ENCODE measurements at regions of chrX and their contacts with region 1.

Region 1: GRCh38 chrX:120468825-120469525 is at the start of gene LAMP2:
- DNase-seq: peak; percentile 94
- H3K4me3 Mint-ChIP-seq: peak within 1 kb of the TSS; percentile 100
- H3K27ac Mint-ChIP-seq: peak within 1 kb of the TSS; percentile 96
- H3K4me1 Mint-ChIP-seq: peaks cover 20% of the 10 kb centered on the region
- H3K27me3 Mint-ChIP-seq: no peaks in the 10 kb centered on the region
- total RNA-seq, gene LAMP2: 42.6 and 44.3 TPM in 2 replicates

Region 2: DNA sequence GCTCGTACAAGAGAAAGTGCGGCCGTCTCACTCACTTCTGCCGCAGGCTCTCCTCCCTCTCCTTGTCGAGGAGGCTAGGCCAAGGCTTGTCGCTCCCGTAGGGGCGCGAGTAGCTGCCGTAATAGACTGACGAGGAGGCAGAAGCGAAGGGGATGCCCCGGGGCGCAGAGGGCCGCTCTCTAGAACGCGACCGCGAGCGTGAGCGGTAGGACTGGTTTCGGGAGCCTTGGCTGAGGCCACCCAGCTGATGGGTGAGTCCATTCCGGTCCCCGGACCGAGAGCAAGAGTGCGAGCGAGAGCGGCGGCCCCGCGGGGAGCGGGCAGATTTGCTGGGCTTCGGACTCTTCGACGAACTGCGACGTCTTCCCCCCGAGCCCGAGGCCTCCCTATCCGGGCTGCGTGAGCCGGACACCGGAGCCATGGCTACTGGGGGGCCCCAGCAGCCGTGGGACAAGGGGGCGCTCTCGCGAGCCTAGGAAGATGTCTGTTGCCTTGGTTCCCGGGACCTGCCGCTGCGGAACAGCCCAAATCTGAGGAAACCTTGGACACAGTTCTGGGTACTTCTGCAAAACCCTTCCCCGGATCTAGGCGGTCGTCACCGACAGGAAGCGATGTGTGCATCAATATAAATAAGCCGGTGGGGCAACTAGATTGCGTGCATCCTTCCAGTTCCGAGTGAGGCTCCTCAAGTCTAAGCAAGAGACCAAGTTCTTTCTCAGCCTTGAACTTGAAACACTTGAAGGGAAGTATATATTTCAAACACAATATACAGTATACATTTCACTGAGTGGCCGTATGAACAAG is 525.6 kb before region 1 on chrX and contains the start of gene NKAP:
- intact Hi-C with region 1: loop called (anchors 2 kb)
- DNase-seq: peak; percentile 95
- H3K4me3 Mint-ChIP-seq: peak within 1 kb of the TSS; percentile 91
- H3K27ac Mint-ChIP-seq: peak within 1 kb of the TSS; percentile 97
- H3K4me1 Mint-ChIP-seq: peaks cover 14% of the 10 kb centered on the region
- H3K27me3 Mint-ChIP-seq: peaks cover 2% of the 10 kb centered on the region
- total RNA-seq, gene NKAP: 8.9 and 10.2 TPM in 2 replicates

Region 3: DNA sequence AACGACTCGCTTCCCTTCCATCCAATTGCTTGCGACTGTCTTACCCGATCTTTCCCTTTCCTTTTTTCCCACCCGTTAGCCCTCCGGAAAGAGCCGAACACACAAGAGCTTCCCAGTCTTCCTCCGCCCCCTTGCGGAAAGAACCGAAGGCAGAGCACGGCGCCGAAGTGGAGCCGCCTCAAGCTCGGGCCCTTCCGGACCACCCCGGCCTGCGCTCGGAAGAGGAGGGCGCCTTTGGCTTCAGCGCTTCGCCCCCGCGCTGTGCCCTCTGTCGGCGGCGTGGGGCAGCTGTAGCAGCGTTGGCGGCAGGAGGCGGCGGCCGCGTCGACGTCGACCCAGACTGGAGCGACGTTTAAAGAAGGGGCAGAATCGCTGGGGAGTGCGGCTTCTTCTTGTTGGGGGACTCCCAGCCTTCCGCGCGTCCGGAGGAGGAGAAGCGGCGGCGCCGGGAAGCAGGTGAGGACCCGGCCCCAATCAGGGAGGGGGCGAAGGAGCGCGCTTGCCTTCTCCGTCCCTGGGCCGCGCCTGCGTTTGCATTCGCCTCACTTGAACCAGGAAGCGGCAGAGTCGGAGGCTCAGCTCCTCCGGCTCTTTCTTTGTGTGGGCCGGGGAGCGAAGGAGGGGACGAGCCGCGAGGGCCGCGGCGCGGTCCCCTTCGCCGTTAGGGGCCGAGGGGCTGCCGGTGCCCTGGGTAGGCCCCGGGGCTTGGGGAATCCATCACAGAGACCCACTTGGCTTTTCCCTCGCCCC is 218.3 kb before region 1 on chrX and contains the start of gene ZBTB33:
- intact Hi-C with region 1: loop called (anchors 1 kb)
- DNase-seq: peak; percentile 95
- H3K4me3 Mint-ChIP-seq: peak within 1 kb of the TSS; percentile 88
- H3K27ac Mint-ChIP-seq: peak within 1 kb of the TSS; percentile 95
- H3K4me1 Mint-ChIP-seq: peaks cover 9% of the 10 kb centered on the region
- H3K27me3 Mint-ChIP-seq: no peaks in the 10 kb centered on the region
- total RNA-seq, gene ZBTB33: 14.4 and 14.6 TPM in 2 replicates

Region 4: DNA sequence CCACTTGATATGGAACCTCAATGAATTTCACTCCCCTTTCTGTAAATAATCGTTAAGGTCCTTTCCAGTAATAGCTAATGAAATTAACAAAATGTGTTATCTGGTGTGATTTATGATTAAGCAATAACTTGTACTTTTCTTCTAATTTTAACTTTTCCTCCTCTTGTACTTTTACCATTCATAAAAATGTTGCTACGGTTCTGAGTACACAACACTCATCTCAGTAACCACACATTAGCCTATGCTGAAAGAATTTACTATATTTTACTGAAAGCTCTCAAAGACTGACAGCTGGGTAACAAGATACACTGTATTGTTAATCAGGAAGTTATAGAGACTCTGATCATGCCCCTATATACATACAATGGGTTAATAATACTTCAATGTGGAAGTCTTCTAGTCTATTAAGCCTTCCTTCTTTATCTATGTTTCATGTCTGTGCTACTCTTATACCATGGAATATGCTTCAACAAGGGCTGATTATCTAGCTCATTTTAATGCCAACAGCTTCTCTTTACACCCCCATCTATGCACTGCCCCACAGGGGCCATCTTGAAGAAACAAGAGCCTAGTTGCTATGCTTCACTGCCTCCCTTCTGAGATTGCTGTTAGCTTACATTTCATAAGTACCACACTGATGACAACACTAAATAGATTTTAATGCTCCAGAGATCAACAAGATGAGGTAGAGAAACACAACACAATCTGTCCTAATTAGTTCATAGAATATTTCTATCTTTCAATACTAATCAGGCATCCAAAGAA is 39.0 kb before region 1 on chrX:
- intact Hi-C with region 1: no loop called
- DNase-seq: no peak
- H3K4me3 Mint-ChIP-seq: no peak overlapping the region
- H3K27ac Mint-ChIP-seq: no peak overlapping the region
- H3K4me1 Mint-ChIP-seq: peaks cover 4% of the 10 kb centered on the region
- H3K27me3 Mint-ChIP-seq: no peaks in the 10 kb centered on the region

Region 5: GRCh38 chrX:120485638-120486520 is 16.9 kb after region 1 on chrX:
- intact Hi-C with region 1: loop called (anchors 1 kb)
- DNase-seq: peak; percentile 86
- H3K4me3 Mint-ChIP-seq: peak overlapping the region; percentile 79
- H3K27ac Mint-ChIP-seq: peak overlapping the region; percentile 91
- H3K4me1 Mint-ChIP-seq: peaks cover 18% of the 10 kb centered on the region
- H3K27me3 Mint-ChIP-seq: no peaks in the 10 kb centered on the region

Measured in activated CD4-positive, alpha-beta T cell treated with anti-CD3 and anti-CD28 coated beads, Interleukin-2, amount 10 ng/mL, durations not matched to agents 24 days and 14 days (primary cell).